HepG2 (cell line): ENCODE measurements at regions of chr4 and their contacts with region 1.

Region 1: DNA sequence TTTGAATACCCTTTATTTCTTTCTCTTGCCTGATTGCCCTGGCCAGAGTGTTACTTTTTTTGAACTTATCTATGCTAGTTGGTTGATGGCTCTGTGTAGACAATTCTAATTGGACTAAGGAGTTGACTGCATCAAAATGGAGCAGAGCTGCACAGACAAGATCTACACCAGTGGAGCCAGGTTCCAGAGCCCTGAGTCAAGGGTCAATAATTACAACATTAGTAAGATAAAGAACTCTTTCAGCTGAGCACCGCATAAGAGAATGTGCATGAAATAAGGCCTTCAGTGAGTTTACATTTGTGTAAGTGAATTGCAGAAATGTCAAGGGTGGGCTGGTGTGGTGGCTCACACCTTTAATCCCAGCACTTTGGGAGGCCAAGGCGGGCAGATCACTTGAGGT is 599.7 kb upstream of the TENM3 start:
- DNase-seq: no peak
- ATAC-seq: no peak
- H3K4me3 ChIP-seq: no peak overlapping the region
- H3K27ac ChIP-seq: no peak overlapping the region
- H3K4me1 ChIP-seq: no peaks in the 10 kb centered on the region
- H3K27me3 ChIP-seq: 0 out of 5 replicates have a peak, but pooled peaks cover 0 to 5% of the 10 kb centered on the region in 2 experiments
- CTCF ChIP-seq: no peak
- EP300 ChIP-seq: no peak
- POLR2A ChIP-seq: no peak
- RAD21 ChIP-seq: no peak

Region 2: DNA sequence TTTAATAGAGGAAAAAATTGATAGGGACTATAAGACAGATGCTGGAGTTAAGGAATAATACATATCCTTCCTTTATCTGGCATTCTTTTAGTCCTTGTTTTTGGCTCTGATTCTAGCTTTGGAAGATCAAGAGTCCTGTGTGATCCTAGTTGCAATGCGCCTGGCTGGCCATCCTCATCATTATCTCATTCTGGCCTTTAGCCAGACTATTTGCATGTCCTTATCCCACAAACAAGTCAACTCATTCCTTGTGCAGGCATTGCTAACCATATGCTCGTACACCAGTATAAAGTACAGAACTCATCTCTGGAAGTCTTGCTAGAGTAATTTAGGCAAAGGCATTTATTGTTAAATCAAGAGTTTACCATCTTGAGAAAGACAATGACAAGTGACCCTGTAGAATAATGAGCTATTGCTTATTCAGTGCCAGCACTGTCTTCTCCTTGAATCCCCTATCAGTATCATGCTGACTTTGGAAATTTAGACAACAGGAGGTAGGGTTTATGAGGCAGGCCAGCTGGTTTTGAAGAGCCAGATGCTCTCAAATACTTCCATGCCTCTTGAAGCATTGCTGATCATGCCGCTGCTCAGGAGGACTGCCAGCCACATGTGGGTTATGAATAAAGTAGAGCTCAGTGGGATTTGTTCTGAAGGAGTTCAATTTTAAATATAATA is 1130.5 kb before region 1 on chr4:
- CTCF ChIA-PET with region 1: no interaction called
- POLR2A ChIA-PET with region 1: no interaction called
- in situ Hi-C with region 1: no loop called
- intact Hi-C with region 1: no loop called
- DNase-seq: no peak
- ATAC-seq: no peak
- H3K4me3 ChIP-seq: no peak overlapping the region
- H3K27ac ChIP-seq: no peak overlapping the region
- H3K4me1 ChIP-seq: no peaks in the 10 kb centered on the region
- H3K27me3 ChIP-seq: no peaks in the 10 kb centered on the region
- CTCF ChIP-seq: no peak
- EP300 ChIP-seq: no peak
- POLR2A ChIP-seq: no peak
- RAD21 ChIP-seq: no peak

Region 3: GRCh38 chr4:181662383-181662782 is 18.9 kb after region 1 on chr4:
- CTCF ChIA-PET with region 1: no interaction called
- POLR2A ChIA-PET with region 1: no interaction called
- in situ Hi-C with region 1: no loop called
- intact Hi-C with region 1: no loop called
- DNase-seq: no peak
- ATAC-seq: no peak
- H3K4me3 ChIP-seq: no peak overlapping the region
- H3K27ac ChIP-seq: no peak overlapping the region
- H3K4me1 ChIP-seq: no peaks in the 10 kb centered on the region
- H3K27me3 ChIP-seq: no peaks in the 10 kb centered on the region
- CTCF ChIP-seq: no peak
- EP300 ChIP-seq: no peak
- POLR2A ChIP-seq: no peak
- RAD21 ChIP-seq: no peak

Region 4: DNA sequence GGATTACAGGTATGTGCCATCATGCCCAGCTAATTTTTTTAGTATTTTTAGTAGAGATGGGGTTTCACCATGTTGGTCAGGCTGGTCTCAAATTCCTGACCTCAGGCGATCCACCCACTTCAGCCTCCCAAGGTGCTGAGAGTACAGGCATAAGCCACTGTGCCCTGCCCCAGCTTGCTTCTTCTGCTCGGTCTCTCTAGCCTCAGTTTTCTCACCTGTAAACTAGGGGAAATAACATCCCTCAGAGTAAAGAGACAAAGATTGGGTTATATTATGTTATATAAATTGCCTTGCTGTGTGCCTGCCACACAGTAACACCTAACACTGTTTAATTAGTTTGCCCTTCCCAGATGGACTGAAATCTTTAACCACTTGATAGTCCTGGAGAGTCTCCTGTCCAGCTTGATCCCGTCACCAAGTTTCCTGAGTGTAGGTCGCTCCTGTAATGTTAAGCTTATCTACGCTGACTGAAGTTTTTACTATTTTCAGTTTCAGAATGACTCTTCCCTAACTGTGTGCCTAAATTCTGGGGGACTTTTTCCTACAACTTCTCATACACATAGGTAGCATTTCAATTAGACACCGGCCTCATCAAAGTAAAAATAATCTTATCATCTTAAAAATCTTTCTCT is 187.1 kb after region 1 on chr4:
- CTCF ChIA-PET with region 1: no interaction called
- POLR2A ChIA-PET with region 1: no interaction called
- in situ Hi-C with region 1: no loop called
- intact Hi-C with region 1: loop called (anchors 5 kb)
- DNase-seq: no peak
- ATAC-seq: no peak
- H3K4me3 ChIP-seq: no peak overlapping the region
- H3K27ac ChIP-seq: no peak overlapping the region
- H3K4me1 ChIP-seq: no peaks in the 10 kb centered on the region
- H3K27me3 ChIP-seq: 0 out of 5 replicates have a peak, but pooled peaks cover 0 to 5% of the 10 kb centered on the region in 2 experiments
- CTCF ChIP-seq: no peak
- EP300 ChIP-seq: no peak
- POLR2A ChIP-seq: no peak
- RAD21 ChIP-seq: no peak